Heart left ventricle (tissue), 16 donors: ENCODE measurements at regions of chr5 and their contacts with region 1.

Region 1: DNA sequence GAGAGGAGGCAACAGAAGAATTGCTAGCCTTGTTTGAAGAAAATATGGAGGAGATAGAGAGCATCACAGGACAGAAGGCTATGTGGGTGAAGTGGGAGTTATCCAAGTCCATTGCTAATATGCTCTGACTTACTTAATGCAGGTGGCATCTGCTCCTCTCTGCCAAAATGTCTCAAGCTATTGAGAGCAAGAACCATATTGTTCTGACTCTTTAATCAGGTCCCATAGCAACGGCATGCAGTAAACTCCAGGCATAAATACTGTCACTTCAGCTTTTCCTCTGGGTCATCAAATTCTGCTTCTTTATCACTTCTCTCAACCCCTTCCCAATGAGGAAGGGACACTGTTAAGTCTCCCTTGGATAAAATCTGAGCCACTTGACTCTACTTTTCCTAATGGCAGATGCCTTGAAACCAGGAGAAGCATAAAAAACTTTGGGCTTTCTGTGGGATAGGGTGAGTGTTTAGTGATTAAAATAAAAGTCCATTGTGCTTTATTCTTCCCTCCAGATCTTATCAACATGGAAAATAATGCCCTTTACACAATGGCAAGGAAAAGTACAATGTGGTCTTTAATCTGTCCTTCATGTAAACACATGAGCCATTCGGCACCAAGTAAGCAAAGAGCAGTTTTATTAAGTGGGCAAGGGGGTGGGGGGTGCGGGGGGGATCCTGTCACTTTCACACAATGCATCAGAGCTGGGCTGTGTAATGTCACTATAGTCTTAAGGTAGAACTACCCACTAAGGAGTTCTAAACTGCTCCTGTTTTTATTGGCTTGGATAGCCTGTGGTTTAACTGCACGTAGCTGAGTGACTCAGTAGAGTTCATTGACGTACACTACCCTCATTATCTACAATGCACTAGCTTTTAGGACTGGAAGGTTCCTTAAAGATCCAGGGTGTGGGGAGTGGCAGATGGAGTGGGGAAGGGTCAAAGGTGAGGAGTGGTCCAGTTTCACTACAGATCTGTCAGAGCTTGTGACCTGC is 71.0 kb upstream of the TARS1 start:
- DNase-seq: peak in 1 of 5 donors; percentile 43
- ATAC-seq: peak; percentile 85 to 95 (median 91)
- H3K4me3 ChIP-seq: no peak overlapping the region
- H3K27ac ChIP-seq: peak overlapping the region in 9 of 12 donors; percentile 6 to 94 (median 56)
- H3K4me1 ChIP-seq: peaks cover 0 to 13% (median 4%) of the 10 kb centered on the region in 12 donors
- H3K27me3 ChIP-seq: no peaks in the 10 kb centered on the region
- CTCF ChIP-seq: no peak
- POLR2A ChIP-seq: no peak

Region 2: DNA sequence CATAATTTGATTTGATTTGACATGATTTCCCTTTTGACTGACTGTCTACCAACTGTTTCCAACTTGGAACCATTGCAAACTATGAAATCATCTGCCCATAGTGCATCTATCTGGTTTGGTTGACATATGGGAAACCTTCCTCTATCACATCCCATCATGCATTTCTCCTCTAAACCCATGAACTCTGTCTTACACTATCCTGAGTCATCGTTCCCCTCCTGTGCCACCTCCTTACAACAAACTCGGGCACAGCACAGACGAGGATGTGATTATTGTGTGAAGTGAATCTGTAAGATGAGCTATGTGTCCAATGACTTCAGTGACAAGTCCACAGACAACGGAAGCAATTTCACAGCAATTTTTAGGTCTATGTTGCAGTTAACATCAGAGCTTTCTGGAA is 532.6 kb before region 1 on chr5:
- intact Hi-C with region 1: loop called in 1 of 10 experiments (anchors 5 kb)
- DNase-seq: no peak
- ATAC-seq: no peak
- H3K4me3 ChIP-seq: no peak overlapping the region
- H3K27ac ChIP-seq: no peak overlapping the region
- H3K4me1 ChIP-seq: peaks cover 0 to 7% (median 0%) of the 10 kb centered on the region in 12 donors
- H3K27me3 ChIP-seq: no peaks in the 10 kb centered on the region
- CTCF ChIP-seq: no peak
- POLR2A ChIP-seq: no peak